ENCODE measurements at regions of chrX and their contacts with region 1.

Region 1: DNA sequence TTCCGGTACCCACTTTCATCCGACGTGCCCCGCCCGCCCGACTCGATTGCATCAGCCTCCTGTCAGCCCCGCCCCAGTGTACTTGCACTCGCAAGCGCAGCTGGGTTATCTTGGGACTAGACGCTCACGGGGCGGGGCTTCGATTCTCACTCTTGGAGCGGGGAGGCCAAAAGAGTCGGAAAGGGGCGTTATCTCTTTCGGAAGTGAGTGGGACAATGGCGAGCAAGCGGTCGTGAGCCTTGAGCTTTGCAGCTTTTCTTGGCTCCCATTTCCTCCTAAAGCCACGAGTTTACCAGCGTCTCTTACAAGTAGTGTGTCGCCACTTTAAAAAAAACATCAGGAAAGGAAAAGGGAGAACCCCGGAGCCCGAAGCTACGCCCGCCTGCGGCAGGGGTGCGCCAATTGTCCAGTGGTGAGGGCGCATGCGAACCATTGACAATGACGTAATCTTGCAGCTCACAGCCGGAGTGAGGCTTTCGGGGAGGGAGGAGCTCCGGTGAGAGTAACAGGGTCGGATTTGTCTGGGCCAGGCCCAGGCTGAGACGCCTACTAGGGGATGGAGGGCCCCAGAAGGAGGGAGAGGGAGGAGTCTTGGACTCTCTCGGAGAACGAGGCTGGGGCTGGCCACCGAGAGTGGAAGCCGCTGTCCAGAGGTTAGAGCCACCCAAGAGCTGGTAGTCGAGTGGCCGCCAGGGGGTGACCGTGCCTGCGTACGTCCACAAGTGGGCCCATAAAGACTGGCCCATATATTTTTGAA is 109.5 kb downstream of the GNL3L start:
- DNase-seq: peak; percentile 88 to 95
- H3K4me3 ChIP-seq: peak overlapping the region; percentile 57
- H3K27ac ChIP-seq: peak overlapping the region; percentile 93
- H3K4me1 ChIP-seq: peaks cover 25% of the 10 kb centered on the region
- H3K27me3 ChIP-seq: no peaks in the 10 kb centered on the region
- CTCF ChIP-seq: peak; percentile 77

Region 2: GRCh38 chrX:54044126-54044876 is 595.2 kb before region 1 on chrX and contains the start of gene PHF8:
- CTCF ChIA-PET with region 1: no interaction called
- POLR2A ChIA-PET with region 1: no interaction called
- intact Hi-C with region 1: loop called (anchors 1 kb)
- DNase-seq: peak; percentile 93 to 98
- H3K4me3 ChIP-seq: peak within 1 kb of the TSS; percentile 96
- H3K27ac ChIP-seq: peak within 1 kb of the TSS; percentile 98
- H3K4me1 ChIP-seq: peaks cover 17% of the 10 kb centered on the region
- H3K27me3 ChIP-seq: no peaks in the 10 kb centered on the region
- CTCF ChIP-seq: no peak
- total RNA-seq, gene PHF8: 40.0 and 56.4 TPM in 2 replicates

Region 3: GRCh38 chrX:54439967-54440871 is 199.3 kb before region 1 on chrX and contains the start of gene TSR2:
- CTCF ChIA-PET with region 1: no interaction called
- POLR2A ChIA-PET with region 1: no interaction called
- intact Hi-C with region 1: loop called (anchors 5 kb)
- DNase-seq: peak; percentile 76 to 80
- H3K4me3 ChIP-seq: peak within 1 kb of the TSS; percentile 83
- H3K27ac ChIP-seq: no peak within 1 kb of the TSS
- H3K4me1 ChIP-seq: peaks cover 8% of the 10 kb centered on the region
- H3K27me3 ChIP-seq: no peaks in the 10 kb centered on the region
- CTCF ChIP-seq: peak; percentile 23; the same call in 1 of the 2 replicates
- total RNA-seq, gene TSR2: 53.0 and 56.9 TPM in 2 replicates

Region 4: GRCh38 chrX:54786962-54787361 is 147.4 kb after region 1 on chrX:
- CTCF ChIA-PET with region 1: interaction called, 3 read pairs
- POLR2A ChIA-PET with region 1: no interaction called
- intact Hi-C with region 1: loop called (anchors 2 kb)
- DNase-seq: peak in 1 of 2 experiments; percentile 11
- H3K4me3 ChIP-seq: no peak overlapping the region
- H3K27ac ChIP-seq: no peak overlapping the region
- H3K4me1 ChIP-seq: no peaks in the 10 kb centered on the region
- H3K27me3 ChIP-seq: peaks cover 34% of the 10 kb centered on the region; the same call in 1 of the 2 replicates
- CTCF ChIP-seq: peak; percentile 51

Region 5: DNA sequence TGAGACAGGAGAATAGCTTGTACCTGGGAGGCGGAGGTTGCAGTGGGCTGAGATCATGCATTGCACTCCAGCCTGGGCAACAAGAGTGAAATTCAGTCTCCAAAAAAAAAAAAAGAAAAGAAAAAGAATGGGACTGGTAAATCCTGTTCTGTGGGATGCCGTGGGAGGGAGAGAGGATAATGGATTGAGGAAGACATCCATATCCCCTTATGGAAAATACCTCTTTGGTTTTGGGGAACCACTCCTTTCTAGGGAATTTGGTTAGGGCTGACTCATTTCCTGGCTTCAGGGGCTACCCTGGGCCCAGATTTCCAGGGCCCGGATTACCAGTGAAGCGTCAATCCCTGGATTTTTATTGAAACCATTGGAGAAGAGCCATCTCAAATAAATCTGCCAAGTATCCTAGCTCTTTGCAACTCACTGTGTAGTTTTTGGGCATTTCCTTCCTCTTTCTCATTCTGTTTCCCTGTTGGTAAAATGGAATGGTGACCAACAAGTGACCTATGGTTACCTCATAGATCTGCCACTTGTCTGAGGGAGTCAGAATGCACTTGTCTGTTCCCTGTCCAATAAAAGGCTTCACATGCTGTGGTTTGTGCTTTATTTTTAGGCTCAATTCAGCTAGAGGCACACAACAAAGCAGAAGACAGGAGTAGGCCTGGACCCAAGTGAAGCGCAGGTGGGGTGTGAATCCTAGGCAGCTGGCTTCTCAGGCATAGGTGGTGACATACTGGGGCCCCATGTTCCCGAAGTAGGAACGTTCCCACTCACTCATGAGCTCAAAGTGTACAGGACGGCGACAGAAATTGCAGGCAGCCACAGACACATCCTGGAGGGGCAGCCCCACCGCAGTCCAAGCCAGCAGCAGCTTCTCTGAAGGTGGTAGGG is 369.2 kb after region 1 on chrX:
- CTCF ChIA-PET with region 1: no interaction called
- POLR2A ChIA-PET with region 1: no interaction called
- intact Hi-C with region 1: loop called (anchors 1 kb)
- DNase-seq: peak; percentile 71 to 95
- H3K4me3 ChIP-seq: no peak overlapping the region
- H3K27ac ChIP-seq: peak overlapping the region; percentile 96
- H3K4me1 ChIP-seq: peaks cover 73% of the 10 kb centered on the region
- H3K27me3 ChIP-seq: no peaks in the 10 kb centered on the region
- CTCF ChIP-seq: no peak

Measured in PC-9 (cell line).